ENCODE measurements at regions of chr11 and their contacts with region 1.

Region 1: GRCh38 chr11:133649040-133649439 is 116.7 kb upstream of the OPCML start:
- DNase-seq: no peak

Region 2: DNA sequence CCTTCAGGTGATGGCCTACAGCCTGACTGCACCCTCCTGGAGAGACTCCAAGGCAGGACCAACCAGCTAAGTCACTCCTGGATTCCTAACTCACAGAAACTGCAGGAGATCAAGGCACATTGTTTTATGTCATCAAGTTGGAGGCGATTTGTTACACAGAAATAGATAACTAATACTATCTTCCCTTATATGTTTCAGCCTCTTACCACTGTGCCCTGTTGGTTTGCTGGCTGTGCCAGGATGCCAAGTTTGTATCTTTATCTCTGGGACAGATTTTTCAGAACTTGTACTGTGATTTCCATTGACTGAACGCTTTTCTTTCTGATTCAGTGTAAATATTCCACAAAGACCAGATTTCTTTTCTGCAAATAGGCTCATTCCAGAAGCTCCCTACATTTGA is 40.5 kb before region 1 on chr11:
- intact Hi-C with region 1: no loop called
- DNase-seq: no peak

Region 3: GRCh38 chr11:133697161-133697560 is 48.1 kb after region 1 on chr11:
- intact Hi-C with region 1: loop called in 1 of 2 experiments (anchors 5 kb)
- DNase-seq: no peak